Vagina (tissue), 2 donors: ENCODE measurements at regions of chr15 and their contacts with region 1.

Region 1: GRCh38 chr15:99076552-99077308 is 28.1 kb upstream of the SYNM start:
- DNase-seq: no peak
- H3K4me3 ChIP-seq: peak overlapping the region; percentile 33 to 42
- H3K27ac ChIP-seq: peak overlapping the region; percentile 72
- H3K4me1 ChIP-seq: no peaks in the 10 kb centered on the region
- H3K27me3 ChIP-seq: no peaks in the 10 kb centered on the region
- CTCF ChIP-seq: peak; percentile 65 to 89 (median 88)
- POLR2A ChIP-seq: no peak

Region 2: DNA sequence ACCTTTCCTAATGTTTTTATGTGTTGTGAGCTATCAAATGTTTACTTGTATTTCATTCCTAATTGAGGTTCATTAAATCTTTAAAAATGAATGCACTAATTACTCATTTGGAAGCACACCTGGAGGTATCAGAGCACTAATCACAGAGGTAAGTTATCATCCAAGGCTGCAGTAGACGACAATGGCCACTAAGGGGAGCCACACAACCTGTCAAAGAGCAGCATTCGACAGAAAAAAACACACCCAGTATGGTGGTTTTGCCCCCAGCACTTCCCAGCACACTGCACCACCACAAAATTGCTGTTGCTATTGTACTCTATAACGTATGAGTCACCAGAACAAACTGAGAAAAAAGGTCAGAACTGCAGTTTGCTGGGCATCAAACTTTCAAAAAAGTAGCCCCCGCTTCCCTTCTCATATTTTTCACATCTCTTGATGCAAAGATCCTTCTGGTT is 634.3 kb before region 1 on chr15:
- intact Hi-C with region 1: loop called (anchors 5 kb)
- DNase-seq: peak in 1 of 2 donors; percentile 70
- H3K4me3 ChIP-seq: no peak overlapping the region
- H3K27ac ChIP-seq: peak overlapping the region; percentile 30
- H3K4me1 ChIP-seq: peaks cover 11% of the 10 kb centered on the region
- H3K27me3 ChIP-seq: no peaks in the 10 kb centered on the region
- CTCF ChIP-seq: peak; percentile 8 to 73 (median 73)
- POLR2A ChIP-seq: no peak

Region 3: GRCh38 chr15:98518823-98519561 is 557.7 kb before region 1 on chr15:
- intact Hi-C with region 1: loop called (anchors 10 kb)
- DNase-seq: no peak
- H3K4me3 ChIP-seq: no peak overlapping the region
- H3K27ac ChIP-seq: no peak overlapping the region
- H3K4me1 ChIP-seq: no peaks in the 10 kb centered on the region
- H3K27me3 ChIP-seq: no peaks in the 10 kb centered on the region
- CTCF ChIP-seq: peak; percentile 65 to 86 (median 83)
- POLR2A ChIP-seq: no peak

Region 4: GRCh38 chr15:98896802-98897732 is 179.7 kb before region 1 on chr15:
- intact Hi-C with region 1: no loop called
- DNase-seq: no peak
- H3K4me3 ChIP-seq: no peak overlapping the region
- H3K27ac ChIP-seq: peak overlapping the region; percentile 78
- H3K4me1 ChIP-seq: peaks cover 59% of the 10 kb centered on the region
- H3K27me3 ChIP-seq: no peaks in the 10 kb centered on the region
- CTCF ChIP-seq: no peak
- POLR2A ChIP-seq: no peak

Region 5: DNA sequence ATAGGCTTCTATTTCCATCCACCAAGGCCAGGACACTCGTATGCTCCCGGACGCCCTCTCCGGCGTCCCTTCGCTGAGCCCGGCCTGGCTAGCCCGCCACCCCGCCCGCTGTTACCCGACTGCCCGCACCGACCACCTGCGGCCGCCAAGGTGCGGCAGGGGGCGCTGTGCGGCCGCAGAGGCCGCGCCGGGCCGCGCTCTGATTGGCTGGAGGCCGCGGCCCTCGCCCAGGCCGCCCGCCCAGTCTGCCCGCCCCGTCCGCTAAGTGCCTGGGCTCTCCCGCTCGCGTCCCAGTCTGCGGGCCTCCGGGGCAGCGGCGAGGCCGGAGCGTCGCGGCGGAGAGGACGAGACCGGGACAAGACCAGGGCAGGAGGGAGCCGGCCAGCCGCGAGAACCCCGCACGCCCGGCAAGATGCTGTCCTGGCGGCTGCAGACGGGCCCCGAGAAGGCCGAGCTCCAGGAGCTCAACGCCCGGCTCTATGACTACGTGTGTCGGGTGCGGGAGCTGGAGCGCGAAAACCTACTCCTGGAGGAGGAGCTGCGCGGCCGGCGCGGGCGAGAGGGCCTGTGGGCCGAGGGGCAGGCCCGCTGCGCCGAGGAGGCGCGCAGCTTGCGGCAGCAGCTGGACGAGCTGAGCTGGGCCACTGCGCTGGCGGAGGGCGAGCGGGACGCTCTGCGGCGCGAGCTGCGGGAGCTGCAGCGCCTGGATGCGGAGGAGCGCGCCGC is 28.2 kb after region 1 on chr15 and contains the start of gene SYNM:
- intact Hi-C with region 1: no loop called
- DNase-seq: peak; percentile 86 to 91
- H3K4me3 ChIP-seq: peak within 1 kb of the TSS; percentile 60 to 76
- H3K27ac ChIP-seq: peak within 1 kb of the TSS; percentile 86
- H3K4me1 ChIP-seq: peaks cover 18% of the 10 kb centered on the region
- H3K27me3 ChIP-seq: no peaks in the 10 kb centered on the region
- CTCF ChIP-seq: peak; percentile 31 to 82 (median 67)
- POLR2A ChIP-seq: peak in 1 of 2 donors; percentile 53
- total RNA-seq, gene SYNM: 62.6 TPM

Region 6: DNA sequence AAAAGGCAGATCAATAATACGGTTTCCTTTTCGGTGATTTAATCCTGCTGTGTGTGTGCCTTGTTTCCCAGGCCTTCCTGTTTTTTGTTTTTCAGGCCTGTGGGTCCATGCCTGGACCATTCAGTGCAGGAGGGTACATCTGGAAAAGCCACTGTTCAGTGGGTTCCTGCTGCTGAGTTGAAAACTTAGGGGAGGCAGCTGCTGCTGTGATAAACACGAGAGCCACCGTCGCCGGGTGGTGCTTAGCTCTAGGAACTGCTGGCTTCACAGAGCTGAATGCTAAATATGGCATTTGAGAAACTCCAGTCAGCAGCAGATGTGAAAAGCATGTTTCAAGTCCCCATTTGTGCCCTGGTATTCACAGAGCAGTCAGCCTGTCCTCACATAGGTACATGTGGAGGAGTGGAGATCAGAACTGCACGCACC is 72.1 kb after region 1 on chr15:
- intact Hi-C with region 1: no loop called
- DNase-seq: peak in 1 of 2 donors; percentile 28
- H3K4me3 ChIP-seq: no peak overlapping the region
- H3K27ac ChIP-seq: no peak overlapping the region
- H3K4me1 ChIP-seq: peaks cover 2% of the 10 kb centered on the region
- H3K27me3 ChIP-seq: no peaks in the 10 kb centered on the region
- CTCF ChIP-seq: no peak
- POLR2A ChIP-seq: no peak